Aorta (tissue), 5 donors: ENCODE measurements at regions of chr6 and their contacts with region 1.

Region 1: GRCh38 chr6:26596579-26597388 is at the start of gene ABT1:
- DNase-seq: peak; percentile 99
- ATAC-seq: peak; percentile 98
- H3K4me3 ChIP-seq: peak within 1 kb of the TSS; percentile 61 to 74
- H3K27ac ChIP-seq: peak within 1 kb of the TSS in 1 of 2 donors; percentile 64
- H3K4me1 ChIP-seq: peaks cover 0 to 3% of the 10 kb centered on the region in 2 donors
- H3K27me3 ChIP-seq: peaks cover 0 to 2% of the 10 kb centered on the region in 2 donors
- total RNA-seq, gene ABT1: 10.7 TPM

Region 2: DNA sequence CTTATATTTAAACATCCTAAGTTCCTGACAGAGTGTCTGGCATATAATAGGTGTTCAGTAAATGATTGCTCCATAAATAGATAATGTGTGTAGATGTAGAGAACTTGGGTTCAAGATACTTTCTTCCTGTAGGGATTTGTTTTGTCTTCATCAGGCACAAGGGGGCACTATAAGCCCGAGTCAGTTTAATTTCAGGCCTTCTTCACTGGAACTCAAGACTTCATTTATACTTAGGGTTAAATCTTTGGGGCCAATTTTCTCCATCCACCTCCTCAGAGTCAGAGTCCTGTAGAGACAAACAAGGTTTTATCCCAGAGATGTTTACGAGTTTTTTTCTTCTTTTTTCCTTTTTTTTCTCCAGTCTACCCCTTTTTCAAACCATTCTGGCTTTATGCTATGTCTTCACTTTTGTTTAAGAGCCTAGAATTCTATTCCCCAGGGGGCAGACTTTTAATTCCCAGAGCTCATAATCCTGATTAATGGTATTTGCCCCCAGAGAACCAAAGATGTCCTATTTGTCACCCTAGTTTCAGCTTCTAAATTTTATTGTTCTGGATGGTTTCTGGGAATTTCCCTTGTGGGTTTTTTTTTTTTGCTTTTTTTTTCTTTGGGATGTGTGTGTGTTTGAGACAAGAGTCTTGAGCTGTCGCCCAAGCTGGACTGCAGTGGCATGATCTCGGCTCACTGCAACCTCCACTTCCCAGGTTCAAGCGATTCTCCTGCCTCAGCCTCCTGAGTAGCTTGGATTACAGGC is 421.2 kb before region 1 on chr6:
- intact Hi-C with region 1: loop called in 1 of 2 experiments (anchors 5 kb)
- DNase-seq: no peak
- ATAC-seq: no peak
- H3K4me3 ChIP-seq: no peak overlapping the region
- H3K27ac ChIP-seq: no peak overlapping the region
- H3K4me1 ChIP-seq: peaks cover 0 to 1% of the 10 kb centered on the region in 2 donors
- H3K27me3 ChIP-seq: no peaks in the 10 kb centered on the region

Region 3: DNA sequence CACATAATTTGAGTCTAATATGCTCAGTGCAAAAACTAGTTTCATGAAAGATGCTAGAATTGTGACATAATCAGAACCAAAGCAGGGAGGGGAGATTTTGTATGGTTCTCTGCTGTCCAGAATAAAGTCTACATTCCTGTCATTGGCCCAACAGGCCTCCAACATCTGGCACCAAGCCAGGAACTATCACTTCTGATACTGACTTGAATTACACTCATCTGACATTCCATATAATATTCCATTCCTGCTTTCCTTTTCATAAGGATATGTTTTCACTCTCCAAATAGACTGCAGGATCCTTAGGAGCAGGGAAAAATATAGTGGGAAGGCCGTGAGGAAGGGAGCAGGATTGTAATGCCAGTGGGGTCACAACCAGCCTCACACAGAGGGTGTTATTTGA is 316.4 kb before region 1 on chr6:
- intact Hi-C with region 1: no loop called
- DNase-seq: no peak
- ATAC-seq: no peak
- H3K4me3 ChIP-seq: no peak overlapping the region
- H3K27ac ChIP-seq: no peak overlapping the region
- H3K4me1 ChIP-seq: peaks cover 0 to 3% of the 10 kb centered on the region in 2 donors
- H3K27me3 ChIP-seq: no peaks in the 10 kb centered on the region

Region 4: GRCh38 chr6:26342106-26343004 is 254.4 kb before region 1 on chr6:
- intact Hi-C with region 1: loop called (anchors 1 to 2 kb)
- DNase-seq: no peak
- ATAC-seq: no peak
- H3K4me3 ChIP-seq: no peak overlapping the region
- H3K27ac ChIP-seq: no peak overlapping the region
- H3K4me1 ChIP-seq: no peaks in the 10 kb centered on the region
- H3K27me3 ChIP-seq: no peaks in the 10 kb centered on the region

Region 5: GRCh38 chr6:26553635-26554446 is 42.9 kb before region 1 on chr6:
- intact Hi-C with region 1: no loop called
- DNase-seq: peak; percentile 82 to 93
- ATAC-seq: peak; percentile 92
- H3K4me3 ChIP-seq: peak overlapping the region; percentile 36 to 60
- H3K27ac ChIP-seq: peak overlapping the region; percentile 12 to 45
- H3K4me1 ChIP-seq: peaks cover 0 to 4% of the 10 kb centered on the region in 2 donors
- H3K27me3 ChIP-seq: no peaks in the 10 kb centered on the region

Region 6: GRCh38 chr6:26646074-26646473 is 49.3 kb after region 1 on chr6:
- intact Hi-C with region 1: no loop called
- DNase-seq: no peak
- ATAC-seq: no peak
- H3K4me3 ChIP-seq: no peak overlapping the region
- H3K27ac ChIP-seq: no peak overlapping the region
- H3K4me1 ChIP-seq: no peaks in the 10 kb centered on the region
- H3K27me3 ChIP-seq: no peaks in the 10 kb centered on the region

Region 7: GRCh38 chr6:27146706-27147505 is 550.1 kb after region 1 on chr6:
- intact Hi-C with region 1: loop called in 1 of 2 experiments (anchors 10 kb)
- DNase-seq: peak; percentile 87 to 90
- ATAC-seq: peak; percentile 96
- H3K4me3 ChIP-seq: peak overlapping the region; percentile 44 to 85
- H3K27ac ChIP-seq: peak overlapping the region in 1 of 2 donors; percentile 82
- H3K4me1 ChIP-seq: no peaks in the 10 kb centered on the region
- H3K27me3 ChIP-seq: no peaks in the 10 kb centered on the region